Caco-2 (cell line): ENCODE measurements at regions of chr7 and their contacts with region 1.

Region 1: GRCh38 chr7:151936207-151936606 is 20.0 kb upstream of the GALNTL5 start:
- DNase-seq: no peak
- H3K4me3 ChIP-seq: no peak overlapping the region
- H3K4me3 Mint-ChIP-seq: no peak overlapping the region
- H3K27ac Mint-ChIP-seq: no peak overlapping the region
- H3K4me1 ChIP-seq: 0 out of 2 replicates have a peak, but pooled peaks cover 3% of the 10 kb centered on the region
- H3K4me1 Mint-ChIP-seq: no peaks in the 10 kb centered on the region
- H3K27me3 ChIP-seq: no peaks in the 10 kb centered on the region
- H3K27me3 Mint-ChIP-seq: peaks cover 21% of the 10 kb centered on the region
- CTCF ChIP-seq: no peak

Region 2: DNA sequence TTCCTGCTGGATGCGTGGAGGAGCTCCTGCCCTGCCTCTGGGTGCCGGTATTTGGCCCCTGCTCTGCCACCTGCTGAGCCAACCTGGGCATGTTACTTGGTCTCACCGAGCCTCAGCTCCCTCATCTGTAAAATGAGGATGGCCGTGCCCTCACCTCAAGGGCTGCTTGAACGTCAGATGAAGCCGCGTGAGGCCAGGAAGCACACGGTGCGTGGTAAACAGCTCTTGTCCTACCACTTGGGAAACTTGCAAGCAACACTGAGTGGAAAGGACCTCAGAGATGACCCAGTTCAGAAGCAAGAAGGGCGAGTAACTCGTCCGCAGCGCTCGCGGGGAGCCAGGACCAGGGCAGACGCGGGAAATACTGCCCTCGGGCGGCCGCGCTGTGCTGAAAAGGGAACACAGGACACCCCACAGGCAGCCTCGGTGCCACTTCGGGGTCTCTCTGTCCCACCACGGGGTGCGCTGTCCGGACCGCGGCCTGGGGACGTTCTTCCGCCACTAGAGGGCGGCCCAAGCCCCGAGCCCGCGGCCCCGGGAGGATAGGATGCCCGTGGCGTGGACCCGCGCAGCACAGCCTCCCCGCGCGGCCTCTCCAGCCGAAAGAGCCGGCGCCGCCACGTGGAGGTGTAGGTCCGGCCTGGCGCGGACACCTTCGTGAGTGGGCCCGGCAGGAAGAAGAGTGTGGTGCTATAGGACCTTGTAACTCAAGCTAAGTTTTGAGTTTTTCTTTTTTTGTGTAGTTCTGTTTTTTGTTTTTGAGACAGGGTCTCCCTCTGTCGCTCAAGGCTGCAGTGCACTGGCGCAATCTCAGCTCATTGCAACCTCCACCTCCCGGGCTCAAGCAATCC is 153.4 kb before region 1 on chr7:
- CTCF ChIA-PET with region 1: no interaction called
- POLR2A ChIA-PET with region 1: no interaction called
- intact Hi-C with region 1: loop called (anchors 5 kb)
- DNase-seq: peak; percentile 61 to 65
- H3K4me3 ChIP-seq: no peak overlapping the region
- H3K4me3 Mint-ChIP-seq: no peak overlapping the region
- H3K27ac Mint-ChIP-seq: no peak overlapping the region
- H3K4me1 ChIP-seq: 0 out of 2 replicates have a peak, but pooled peaks cover 6% of the 10 kb centered on the region
- H3K4me1 Mint-ChIP-seq: no peaks in the 10 kb centered on the region
- H3K27me3 ChIP-seq: no peaks in the 10 kb centered on the region
- H3K27me3 Mint-ChIP-seq: peaks cover 3% of the 10 kb centered on the region
- CTCF ChIP-seq: peak; percentile 71 to 81

Region 3: DNA sequence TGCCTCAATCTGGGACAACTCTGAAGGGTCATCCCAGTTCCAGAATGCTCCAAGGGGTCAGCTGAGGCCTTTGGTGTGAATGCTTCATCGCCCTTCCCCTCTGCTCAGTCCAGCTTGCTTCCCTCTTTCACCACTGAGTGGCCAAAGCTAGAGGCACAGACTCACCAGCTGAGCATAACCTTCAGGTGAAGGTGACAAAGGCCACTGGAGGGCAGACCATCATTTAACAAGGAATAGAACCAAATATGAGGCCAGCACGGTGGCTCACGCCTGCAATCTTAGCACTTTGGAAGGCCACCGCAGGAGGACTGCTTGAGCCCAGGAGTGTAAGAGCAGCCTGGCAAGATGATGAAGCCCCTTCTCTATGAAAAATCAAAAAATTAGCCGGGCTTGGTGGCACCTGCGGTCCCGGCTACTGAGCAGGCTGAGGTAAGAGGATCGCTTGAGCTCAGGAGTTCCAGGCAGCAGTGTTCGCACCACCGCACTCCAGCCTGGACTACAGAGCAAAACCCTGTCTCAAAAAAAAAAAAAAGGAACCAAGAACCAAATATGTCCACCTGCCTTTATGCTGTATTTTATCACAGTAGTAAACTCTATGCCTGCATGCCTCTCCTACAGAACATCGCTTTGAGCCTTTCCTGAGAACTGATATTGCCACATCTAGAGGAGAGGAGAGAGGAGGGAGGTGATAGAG is 72.7 kb before region 1 on chr7:
- CTCF ChIA-PET with region 1: interaction called, 10 read pairs
- POLR2A ChIA-PET with region 1: no interaction called
- intact Hi-C with region 1: loop called (anchors 1 kb)
- DNase-seq: peak; percentile 65 to 67
- H3K4me3 ChIP-seq: no peak overlapping the region
- H3K4me3 Mint-ChIP-seq: no peak overlapping the region
- H3K27ac Mint-ChIP-seq: no peak overlapping the region
- H3K4me1 ChIP-seq: no peaks in the 10 kb centered on the region
- H3K4me1 Mint-ChIP-seq: no peaks in the 10 kb centered on the region
- H3K27me3 ChIP-seq: no peaks in the 10 kb centered on the region
- H3K27me3 Mint-ChIP-seq: no peaks in the 10 kb centered on the region
- CTCF ChIP-seq: peak; percentile 58 to 79

Region 4: GRCh38 chr7:151876899-151877777 is 59.1 kb before region 1 on chr7 and contains the start of gene PRKAG2:
- CTCF ChIA-PET with region 1: interaction called, 3 read pairs
- POLR2A ChIA-PET with region 1: interaction called, 3 read pairs
- intact Hi-C with region 1: loop called (anchors 1 kb)
- DNase-seq: peak; percentile 62 to 63
- H3K4me3 ChIP-seq: peak within 1 kb of the TSS; percentile 83
- H3K4me3 Mint-ChIP-seq: peak within 1 kb of the TSS; percentile 94
- H3K27ac Mint-ChIP-seq: no peak within 1 kb of the TSS
- H3K4me1 ChIP-seq: 0 out of 2 replicates have a peak, but pooled peaks cover 7% of the 10 kb centered on the region
- H3K4me1 Mint-ChIP-seq: no peaks in the 10 kb centered on the region
- H3K27me3 ChIP-seq: peaks cover 1% of the 10 kb centered on the region; the same call in 1 of the 2 replicates
- H3K27me3 Mint-ChIP-seq: no peaks in the 10 kb centered on the region
- CTCF ChIP-seq: no peak
- total RNA-seq, gene PRKAG2: 14.7 and 15.9 TPM in 2 replicates

Region 5: DNA sequence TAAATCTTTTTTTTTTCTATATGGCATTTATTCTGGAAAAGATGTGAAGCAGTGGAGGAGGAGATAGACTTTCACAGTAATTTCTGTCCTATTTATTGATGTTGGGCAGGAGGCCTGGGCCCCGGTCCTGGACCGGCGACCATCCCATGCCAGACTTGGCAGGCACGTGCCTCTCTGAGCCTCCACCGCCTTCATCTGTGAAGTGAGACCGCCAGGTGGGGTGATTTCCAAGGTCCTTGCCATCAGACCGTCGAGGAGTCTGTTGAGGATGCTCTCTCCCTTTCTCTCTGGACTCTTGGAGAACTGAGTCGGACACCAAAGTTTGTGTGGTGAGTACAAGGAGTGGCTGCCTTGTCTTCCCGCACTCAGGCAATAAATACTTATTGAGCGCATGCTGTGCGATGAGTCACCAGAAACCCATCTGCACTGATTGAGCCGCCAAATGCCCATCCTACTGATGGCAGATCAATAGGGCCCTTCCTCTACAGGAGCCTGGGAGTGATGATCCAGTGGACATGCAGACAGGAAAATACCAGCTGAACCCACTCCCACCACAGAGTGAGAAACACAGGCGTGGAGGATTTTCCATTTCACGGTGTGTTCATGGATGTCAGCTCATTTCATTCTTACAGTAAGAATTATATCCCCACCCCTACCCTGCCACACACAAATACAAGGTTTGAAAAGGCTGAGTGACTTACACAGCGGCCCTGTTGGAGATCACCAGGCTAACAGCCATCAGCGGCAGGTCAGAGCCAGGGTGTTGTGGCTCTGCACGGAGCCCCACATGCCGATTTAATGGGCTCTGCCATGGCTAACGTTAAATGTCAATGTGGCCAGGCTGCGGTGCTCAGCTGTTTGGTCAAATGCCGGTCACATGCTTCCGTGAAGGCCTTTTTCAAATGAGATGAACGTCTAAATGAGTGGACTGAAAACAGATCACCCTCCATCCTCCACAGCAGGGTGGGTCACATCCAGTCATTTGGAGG is 47.8 kb before region 1 on chr7:
- CTCF ChIA-PET with region 1: no interaction called
- POLR2A ChIA-PET with region 1: no interaction called
- intact Hi-C with region 1: loop called (anchors 1 kb)
- DNase-seq: peak; percentile 41 to 50
- H3K4me3 ChIP-seq: no peak overlapping the region
- H3K4me3 Mint-ChIP-seq: no peak overlapping the region
- H3K27ac Mint-ChIP-seq: no peak overlapping the region
- H3K4me1 ChIP-seq: no peaks in the 10 kb centered on the region
- H3K4me1 Mint-ChIP-seq: peaks cover 6% of the 10 kb centered on the region
- H3K27me3 ChIP-seq: no peaks in the 10 kb centered on the region; the same call in 1 of the 2 replicates
- H3K27me3 Mint-ChIP-seq: peaks cover 24% of the 10 kb centered on the region
- CTCF ChIP-seq: peak in 1 of 2 experiments; percentile 42

Region 6: DNA sequence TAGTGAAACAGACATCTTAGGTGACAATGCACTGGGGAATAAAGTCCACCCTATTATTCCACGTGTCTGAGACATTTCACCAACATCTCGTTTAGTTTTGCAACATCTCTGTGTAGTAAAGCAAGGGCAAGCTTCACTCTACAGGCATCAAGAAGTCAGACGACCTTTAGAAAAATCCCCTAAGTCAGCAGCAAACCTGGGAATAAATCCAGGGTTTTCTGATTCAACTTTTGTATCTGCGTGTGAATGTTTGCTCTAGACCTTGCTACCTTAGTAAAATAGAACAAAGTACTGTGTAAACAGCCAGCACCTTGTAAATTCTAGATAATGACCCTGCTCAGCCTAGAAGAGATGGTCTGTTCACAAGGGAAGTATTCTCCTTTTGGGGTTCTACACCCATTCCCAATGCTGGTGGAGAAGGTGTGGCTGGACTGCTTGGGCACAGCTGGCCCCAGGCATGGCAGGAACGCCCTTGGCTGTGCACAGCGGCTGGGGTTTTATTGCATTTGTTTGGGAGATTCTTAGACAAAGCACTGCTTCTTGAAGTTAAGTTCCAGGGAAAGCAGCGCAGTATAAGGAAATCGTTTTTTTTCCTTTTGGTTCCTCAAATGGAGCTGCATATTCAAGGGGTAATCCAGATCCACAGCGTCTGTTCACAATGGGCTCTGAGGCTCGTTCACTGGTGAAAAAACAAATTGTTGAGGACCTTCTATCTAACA is 18.3 kb before region 1 on chr7:
- CTCF ChIA-PET with region 1: no interaction called
- POLR2A ChIA-PET with region 1: no interaction called
- intact Hi-C with region 1: loop called (anchors 2 kb)
- DNase-seq: peak in 1 of 2 experiments; percentile 39
- H3K4me3 ChIP-seq: no peak overlapping the region
- H3K4me3 Mint-ChIP-seq: peak overlapping the region; percentile 45
- H3K27ac Mint-ChIP-seq: peak overlapping the region; percentile 86
- H3K4me1 ChIP-seq: peaks cover 18% of the 10 kb centered on the region
- H3K4me1 Mint-ChIP-seq: peaks cover 17% of the 10 kb centered on the region
- H3K27me3 ChIP-seq: no peaks in the 10 kb centered on the region
- H3K27me3 Mint-ChIP-seq: no peaks in the 10 kb centered on the region
- CTCF ChIP-seq: no peak